ENCODE measurements at regions of chr1 and their contacts with region 1.

Region 1: GRCh38 chr1:39098546-39099250 is 72.5 kb downstream of the NDUFS5 start:
- DNase-seq: peak; percentile 61
- H3K4me3 ChIP-seq: no peak overlapping the region
- H3K27ac ChIP-seq: no peak overlapping the region
- H3K4me1 ChIP-seq: no peaks in the 10 kb centered on the region
- H3K27me3 ChIP-seq: no peaks in the 10 kb centered on the region
- CTCF ChIP-seq: peak; percentile 63

Region 2: DNA sequence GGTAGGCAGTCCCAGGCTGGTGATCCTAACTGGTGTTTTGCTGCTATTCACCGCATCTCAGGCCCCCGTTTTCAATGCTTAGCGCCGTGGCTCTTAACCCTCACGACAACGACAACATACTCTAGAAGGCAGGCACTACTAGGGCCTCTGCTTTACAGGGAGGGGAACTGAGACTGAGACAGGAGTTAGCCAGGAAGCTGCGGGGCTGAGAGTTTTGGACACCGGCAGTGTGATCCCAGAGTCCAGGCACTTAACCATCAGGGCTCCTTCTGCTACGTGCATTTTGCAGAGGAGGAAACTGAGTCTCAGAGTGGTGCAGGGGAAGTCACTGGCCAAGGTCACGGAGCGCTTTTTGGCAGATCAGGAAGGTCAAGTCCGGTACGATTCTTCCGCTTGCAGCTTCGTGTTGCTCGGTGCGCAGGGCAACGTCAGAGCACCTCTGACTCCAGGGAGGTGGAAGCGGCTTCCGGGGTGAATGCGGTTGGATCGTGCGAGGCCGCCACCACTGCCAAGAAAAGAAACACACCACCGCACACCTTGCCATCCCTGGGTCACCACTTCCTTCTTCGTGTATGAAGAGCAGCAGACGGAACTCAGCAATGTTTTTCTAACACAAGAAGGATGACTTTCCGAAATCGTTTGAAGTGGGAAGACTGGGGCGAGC is 539.4 kb before region 1 on chr1:
- intact Hi-C with region 1: no loop called
- DNase-seq: peak; percentile 27
- H3K4me3 ChIP-seq: no peak overlapping the region
- H3K27ac ChIP-seq: no peak overlapping the region
- H3K4me1 ChIP-seq: no peaks in the 10 kb centered on the region
- H3K27me3 ChIP-seq: no peaks in the 10 kb centered on the region
- CTCF ChIP-seq: no peak

Region 3: GRCh38 chr1:39189592-39190041 is 90.9 kb after region 1 on chr1:
- intact Hi-C with region 1: loop called (anchors 2 kb)
- DNase-seq: no peak
- H3K4me3 ChIP-seq: no peak overlapping the region
- H3K27ac ChIP-seq: no peak overlapping the region
- H3K4me1 ChIP-seq: no peaks in the 10 kb centered on the region
- H3K27me3 ChIP-seq: no peaks in the 10 kb centered on the region
- CTCF ChIP-seq: no peak

Region 4: DNA sequence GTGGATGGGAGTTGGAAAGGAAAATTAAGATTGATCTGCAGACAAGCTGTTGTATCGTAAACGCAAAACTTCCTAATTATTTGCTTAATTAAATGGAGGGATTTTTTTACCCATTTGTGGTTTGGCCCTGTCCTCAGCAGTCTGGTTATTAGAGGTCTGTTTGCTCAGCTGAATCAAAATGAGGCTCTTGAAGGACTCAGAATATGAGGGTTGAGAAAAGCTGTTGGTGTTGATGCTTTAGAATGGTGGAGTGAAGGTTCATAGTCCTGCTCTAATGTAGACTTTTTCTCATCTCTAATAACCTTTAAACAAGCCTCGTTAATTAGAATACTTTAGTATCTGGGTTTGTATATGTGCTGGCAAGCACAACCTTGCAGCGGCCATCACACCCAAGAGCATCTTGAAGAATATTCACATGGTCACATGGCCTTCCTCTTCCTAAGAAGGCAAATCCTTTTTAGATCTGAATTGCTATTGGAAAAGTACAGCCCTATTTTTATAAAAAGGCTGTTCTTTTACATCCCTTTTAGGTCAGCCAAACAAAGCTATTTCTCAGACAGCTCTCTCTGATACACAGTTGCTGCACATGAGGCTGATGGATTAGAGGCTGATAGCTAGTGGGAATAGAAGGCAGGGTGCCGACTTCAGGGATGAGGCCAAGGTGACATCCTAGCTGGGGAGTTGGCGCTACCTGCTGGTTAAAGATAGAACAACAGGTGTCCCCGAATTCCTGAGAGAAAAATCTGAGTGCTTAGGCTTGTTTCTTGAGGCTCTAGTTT is 159.6 kb after region 1 on chr1:
- intact Hi-C with region 1: loop called (anchors 2 kb)
- DNase-seq: peak; percentile 77
- H3K4me3 ChIP-seq: no peak overlapping the region
- H3K27ac ChIP-seq: no peak overlapping the region
- H3K4me1 ChIP-seq: no peaks in the 10 kb centered on the region
- H3K27me3 ChIP-seq: no peaks in the 10 kb centered on the region
- CTCF ChIP-seq: peak; percentile 81

Region 5: DNA sequence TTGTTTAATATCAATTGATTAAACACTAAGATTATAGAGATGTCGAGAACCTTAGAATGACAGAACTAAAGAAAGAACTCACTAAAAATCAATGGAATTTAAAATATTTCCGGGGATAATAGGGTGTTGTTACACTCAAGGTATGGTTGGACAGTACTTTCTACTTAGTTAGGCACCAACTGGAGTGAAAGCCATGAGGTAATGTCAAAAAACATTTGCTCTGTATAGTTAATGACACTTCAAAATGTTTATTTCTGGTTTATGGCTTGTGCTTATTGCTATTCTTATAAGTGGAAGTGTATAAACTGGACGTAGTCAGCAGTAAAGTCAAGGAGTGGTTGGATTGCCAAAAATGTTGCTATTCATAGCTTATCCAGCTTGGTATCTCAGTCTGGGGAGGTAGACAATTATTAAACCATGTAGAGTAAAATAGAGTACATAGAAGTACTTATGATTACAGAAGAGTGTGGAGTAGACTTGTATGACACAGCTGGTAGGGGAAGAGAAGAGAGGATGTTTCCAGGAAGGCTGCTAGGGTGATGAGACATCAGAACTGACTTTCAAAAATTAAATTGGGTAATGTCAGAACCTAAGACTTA is 336.2 kb after region 1 on chr1:
- intact Hi-C with region 1: no loop called
- DNase-seq: no peak
- H3K4me3 ChIP-seq: no peak overlapping the region
- H3K27ac ChIP-seq: peak overlapping the region; percentile 39
- H3K4me1 ChIP-seq: no peaks in the 10 kb centered on the region
- H3K27me3 ChIP-seq: no peaks in the 10 kb centered on the region
- CTCF ChIP-seq: no peak

Region 6: GRCh38 chr1:39653546-39654031 is 554.9 kb after region 1 on chr1:
- intact Hi-C with region 1: loop called (anchors 10 kb)
- DNase-seq: peak; percentile 73
- H3K4me3 ChIP-seq: no peak overlapping the region
- H3K27ac ChIP-seq: no peak overlapping the region
- H3K4me1 ChIP-seq: no peaks in the 10 kb centered on the region
- H3K27me3 ChIP-seq: no peaks in the 10 kb centered on the region
- CTCF ChIP-seq: peak; percentile 88

Region 7: GRCh38 chr1:39711104-39711965 is 612.6 kb after region 1 on chr1:
- intact Hi-C with region 1: loop called (anchors 10 kb)
- DNase-seq: no peak
- H3K4me3 ChIP-seq: no peak overlapping the region
- H3K27ac ChIP-seq: no peak overlapping the region
- H3K4me1 ChIP-seq: no peaks in the 10 kb centered on the region
- H3K27me3 ChIP-seq: no peaks in the 10 kb centered on the region
- CTCF ChIP-seq: no peak

Measured in colonic mucosa (tissue), 4 donors.